Activated B cell treated with CpG ODN at 0.5 μM for 24 hours (primary cell): ENCODE measurements at regions of chr15 and their contacts with region 1.

Region 1: GRCh38 chr15:38479266-38479665 is 25.3 kb downstream of the FAM98B start:
- DNase-seq: no peak
- ATAC-seq: no peak
- H3K4me3 Mint-ChIP-seq: no peak overlapping the region
- H3K27ac Mint-ChIP-seq: no peak overlapping the region
- H3K4me1 Mint-ChIP-seq: peaks cover 3% of the 10 kb centered on the region
- H3K27me3 Mint-ChIP-seq: no peaks in the 10 kb centered on the region
- CTCF ChIP-seq: no peak

Region 2: GRCh38 chr15:38514601-38515000 is 35.3 kb after region 1 on chr15:
- CTCF ChIA-PET with region 1: no interaction called
- POLR2A ChIA-PET with region 1: no interaction called
- intact Hi-C with region 1: loop called (anchors 5 kb)
- DNase-seq: no peak
- ATAC-seq: peak; percentile 88
- H3K4me3 Mint-ChIP-seq: no peak overlapping the region
- H3K27ac Mint-ChIP-seq: peak overlapping the region; percentile 2
- H3K4me1 Mint-ChIP-seq: peaks cover 16% of the 10 kb centered on the region
- H3K27me3 Mint-ChIP-seq: no peaks in the 10 kb centered on the region
- CTCF ChIP-seq: no peak